MCF 10A (cell line): ENCODE measurements at regions of chr9 and their contacts with region 1.

Region 1: DNA sequence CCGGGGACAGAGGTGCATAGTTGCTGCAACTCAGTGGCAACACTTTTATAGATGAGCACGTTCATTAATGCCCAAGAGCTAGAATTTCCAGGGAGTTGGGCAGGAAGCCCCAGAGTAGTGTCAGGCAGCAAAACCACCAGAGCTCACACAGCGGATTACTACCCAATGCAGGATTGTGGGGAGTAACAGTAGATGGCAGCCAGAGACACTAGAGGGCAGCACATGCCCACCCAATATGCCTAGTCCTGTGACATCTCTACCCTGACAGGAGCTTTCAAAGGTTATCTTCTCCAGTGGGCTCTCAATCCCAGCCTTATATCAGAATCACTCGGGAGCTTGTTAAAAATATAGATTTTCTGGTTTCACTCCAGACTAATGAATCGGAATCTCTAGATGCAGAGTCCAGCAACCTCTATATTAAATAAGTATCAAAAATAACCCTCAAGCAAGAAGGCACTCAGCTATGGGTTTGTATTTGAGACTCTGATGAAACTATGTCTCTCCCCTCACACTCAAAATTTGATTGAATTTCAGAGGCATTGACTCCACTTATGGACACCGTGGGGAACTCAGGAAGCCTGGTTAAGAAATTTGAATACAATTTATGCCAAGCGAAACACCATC is 58.4 kb upstream of the PHF24 start:
- DNase-seq: peak; percentile 85
- H3K4me3 Mint-ChIP-seq: no peak overlapping the region
- H3K27ac Mint-ChIP-seq: no peak overlapping the region
- H3K4me1 Mint-ChIP-seq: no peaks in the 10 kb centered on the region
- H3K27me3 Mint-ChIP-seq: peaks cover 82% of the 10 kb centered on the region
- CTCF ChIP-seq: peak; percentile 83

Region 2: GRCh38 chr9:34185778-34186551 is 713.7 kb before region 1 on chr9:
- CTCF ChIA-PET with region 1: no interaction called
- POLR2A ChIA-PET with region 1: no interaction called
- intact Hi-C with region 1: no loop called
- DNase-seq: peak; percentile 96
- H3K4me3 Mint-ChIP-seq: peak overlapping the region; percentile 8
- H3K27ac Mint-ChIP-seq: peak overlapping the region; percentile 67
- H3K4me1 Mint-ChIP-seq: peaks cover 23% of the 10 kb centered on the region
- H3K27me3 Mint-ChIP-seq: no peaks in the 10 kb centered on the region
- CTCF ChIP-seq: no peak

Region 3: GRCh38 chr9:34869390-34869789 is 30.3 kb before region 1 on chr9:
- CTCF ChIA-PET with region 1: no interaction called
- POLR2A ChIA-PET with region 1: no interaction called
- intact Hi-C with region 1: no loop called
- DNase-seq: peak; percentile 47
- H3K4me3 Mint-ChIP-seq: no peak overlapping the region
- H3K27ac Mint-ChIP-seq: no peak overlapping the region
- H3K4me1 Mint-ChIP-seq: no peaks in the 10 kb centered on the region
- H3K27me3 Mint-ChIP-seq: peaks cover 43% of the 10 kb centered on the region
- CTCF ChIP-seq: peak; percentile 22

Region 4: GRCh38 chr9:34980181-34980761 is 80.6 kb after region 1 on chr9:
- CTCF ChIA-PET with region 1: interaction called, 49 read pairs
- POLR2A ChIA-PET with region 1: interaction called, 6 read pairs
- intact Hi-C with region 1: loop called (anchors 1 kb)
- DNase-seq: no peak
- H3K4me3 Mint-ChIP-seq: no peak overlapping the region
- H3K27ac Mint-ChIP-seq: no peak overlapping the region
- H3K4me1 Mint-ChIP-seq: no peaks in the 10 kb centered on the region
- H3K27me3 Mint-ChIP-seq: peaks cover 26% of the 10 kb centered on the region
- CTCF ChIP-seq: no peak

Region 5: GRCh38 chr9:35001803-35002502 is 102.3 kb after region 1 on chr9:
- CTCF ChIA-PET with region 1: interaction called, 76 read pairs
- POLR2A ChIA-PET with region 1: no interaction called
- intact Hi-C with region 1: no loop called
- DNase-seq: peak; percentile 82
- H3K4me3 Mint-ChIP-seq: no peak overlapping the region
- H3K27ac Mint-ChIP-seq: no peak overlapping the region
- H3K4me1 Mint-ChIP-seq: peaks cover 18% of the 10 kb centered on the region
- H3K27me3 Mint-ChIP-seq: no peaks in the 10 kb centered on the region
- CTCF ChIP-seq: no peak

Region 6: DNA sequence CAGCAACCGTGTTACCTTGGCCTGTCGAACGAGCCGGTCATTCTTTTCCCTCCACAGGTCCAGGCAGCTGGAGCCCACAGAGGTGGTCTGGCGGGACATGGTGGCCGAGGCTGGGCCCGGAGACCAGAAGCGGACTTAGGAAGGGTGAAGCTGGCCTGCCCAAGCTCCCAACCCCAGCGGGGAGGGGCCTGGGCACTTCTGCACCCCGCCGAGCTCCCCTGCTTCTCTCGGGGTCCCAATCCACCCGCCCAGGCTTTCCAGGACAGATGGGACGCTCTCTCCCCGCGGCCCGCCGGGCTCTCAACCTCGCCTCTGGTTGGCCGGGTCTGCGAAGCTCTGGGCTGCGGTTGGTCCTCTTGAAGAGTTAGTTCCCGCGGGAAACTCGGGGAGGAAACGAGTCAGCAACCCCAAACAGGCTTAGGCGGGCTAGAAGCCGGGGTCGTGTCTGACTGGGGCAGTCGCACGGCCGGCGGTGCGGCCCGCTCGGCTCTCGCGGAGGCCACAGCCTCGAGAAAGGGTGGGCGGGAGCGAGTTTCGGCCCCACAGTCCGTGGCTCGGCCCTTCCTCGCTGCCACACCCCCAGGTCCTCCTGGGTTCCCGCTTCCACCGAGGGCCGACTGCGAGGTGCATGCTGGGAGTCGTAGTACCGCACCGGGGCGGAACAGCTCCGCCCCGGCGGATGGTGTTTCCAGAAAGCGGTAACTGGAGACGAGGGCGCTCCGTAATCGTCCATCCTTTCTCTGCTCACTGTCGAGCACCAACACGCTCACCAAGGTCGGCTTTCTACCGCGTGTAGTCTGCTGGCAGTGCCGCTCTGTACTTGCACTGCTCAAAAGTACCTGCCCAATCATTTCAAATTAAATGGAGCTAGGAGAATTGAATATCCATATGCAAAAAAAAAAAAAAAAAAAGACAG is 180.0 kb after region 1 on chr9 and contains the start of gene FANCG:
- CTCF ChIA-PET with region 1: interaction called, 16 read pairs
- POLR2A ChIA-PET with region 1: interaction called, 5 read pairs
- intact Hi-C with region 1: no loop called
- DNase-seq: peak; percentile 94
- H3K4me3 Mint-ChIP-seq: peak within 1 kb of the TSS; percentile 94
- H3K27ac Mint-ChIP-seq: peak within 1 kb of the TSS; percentile 54
- H3K4me1 Mint-ChIP-seq: peaks cover 9% of the 10 kb centered on the region
- H3K27me3 Mint-ChIP-seq: no peaks in the 10 kb centered on the region
- CTCF ChIP-seq: no peak
- total RNA-seq, gene FANCG: 20.2 and 21.2 TPM in 2 replicates

Region 7: DNA sequence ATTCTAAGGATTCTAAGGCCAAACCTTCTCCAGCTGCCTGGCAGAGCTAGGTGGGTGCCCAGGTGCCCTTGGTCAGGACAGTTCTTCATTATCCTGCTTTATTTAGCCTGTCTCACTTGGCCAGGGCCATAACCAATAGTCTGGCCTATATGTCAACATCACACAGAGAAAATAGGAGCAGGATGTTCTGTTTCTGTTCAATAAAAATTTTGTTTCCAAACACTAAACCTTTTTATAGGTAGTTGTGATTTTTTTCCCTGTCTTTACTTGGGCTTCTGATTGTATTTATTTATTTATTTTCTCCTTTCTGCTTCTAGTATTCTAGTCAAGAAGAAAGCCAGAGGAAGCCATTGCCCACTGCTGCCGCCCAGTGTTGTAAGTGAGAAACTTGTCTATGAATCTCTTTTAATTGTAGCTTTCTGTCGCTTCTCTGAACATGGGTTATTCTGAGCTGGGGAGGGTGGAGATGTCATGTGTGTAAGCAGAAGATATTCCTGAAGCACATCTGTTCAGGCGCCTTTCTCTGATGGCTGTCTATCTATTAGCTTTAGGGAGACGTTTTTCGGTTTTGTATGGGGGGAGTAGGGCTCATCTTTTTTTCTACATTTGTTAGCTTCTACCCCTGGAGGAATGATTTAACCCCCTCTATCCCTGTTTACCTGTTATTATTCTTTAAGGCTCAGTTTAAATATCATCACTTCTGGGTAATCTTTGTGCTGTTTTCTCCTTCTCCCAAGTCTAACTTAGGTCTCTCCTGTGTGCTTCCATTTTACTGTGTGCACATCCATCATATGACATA is 359.2 kb after region 1 on chr9:
- CTCF ChIA-PET with region 1: no interaction called
- POLR2A ChIA-PET with region 1: no interaction called
- intact Hi-C with region 1: loop called (anchors 2 kb)
- DNase-seq: peak; percentile 81
- H3K4me3 Mint-ChIP-seq: no peak overlapping the region
- H3K27ac Mint-ChIP-seq: no peak overlapping the region
- H3K4me1 Mint-ChIP-seq: peaks cover 8% of the 10 kb centered on the region
- H3K27me3 Mint-ChIP-seq: no peaks in the 10 kb centered on the region
- CTCF ChIP-seq: peak; percentile 71